ENCODE measurements at regions of chr19 and their contacts with region 1.

Region 1: GRCh38 chr19:28466107-28467045 is 746.6 kb downstream of the UQCRFS1 start:
- DNase-seq: peak; percentile 81
- H3K4me3 ChIP-seq: no peak overlapping the region
- H3K27ac ChIP-seq: no peak overlapping the region
- H3K4me1 ChIP-seq: no peaks in the 10 kb centered on the region
- H3K27me3 ChIP-seq: no peaks in the 10 kb centered on the region
- CTCF ChIP-seq: peak; percentile 74

Region 2: GRCh38 chr19:28633319-28634018 is 167.1 kb after region 1 on chr19:
- intact Hi-C with region 1: loop called (anchors 2 kb)
- DNase-seq: peak; percentile 57
- H3K4me3 ChIP-seq: no peak overlapping the region
- H3K27ac ChIP-seq: no peak overlapping the region
- H3K4me1 ChIP-seq: no peaks in the 10 kb centered on the region
- H3K27me3 ChIP-seq: no peaks in the 10 kb centered on the region
- CTCF ChIP-seq: peak; percentile 91

Region 3: GRCh38 chr19:28705008-28705407 is 238.6 kb after region 1 on chr19:
- intact Hi-C with region 1: loop called (anchors 5 kb)
- DNase-seq: no peak
- H3K4me3 ChIP-seq: no peak overlapping the region
- H3K27ac ChIP-seq: no peak overlapping the region
- H3K4me1 ChIP-seq: no peaks in the 10 kb centered on the region
- H3K27me3 ChIP-seq: no peaks in the 10 kb centered on the region
- CTCF ChIP-seq: no peak

Measured in colonic mucosa (tissue), 4 donors.